Endothelial cell of umbilical vein (primary cell): ENCODE measurements at regions of chr12 and their contacts with region 1.

Region 1: GRCh38 chr12:106302401-106303201 is at the start of gene TCP11L2:
- DNase-seq: peak; percentile 79
- H3K4me3 ChIP-seq: peak within 1 kb of the TSS; percentile 62 to 83 (median 73)
- H3K27ac ChIP-seq: peak within 1 kb of the TSS; percentile 98
- H3K4me1 ChIP-seq: peaks cover 14% of the 10 kb centered on the region
- H3K27me3 ChIP-seq: peaks cover 0 to 1% of the 10 kb centered on the region in 2 experiments
- CTCF ChIP-seq: no peak
- POLR2A ChIP-seq: no peak
- total RNA-seq, gene TCP11L2: 15.3 and 18.7 TPM in 2 replicates

Region 2: GRCh38 chr12:106022568-106023012 is 280.0 kb before region 1 on chr12:
- CTCF ChIA-PET with region 1: no interaction called
- POLR2A ChIA-PET with region 1: no interaction called
- dilution Hi-C with region 1: no loop called
- intact Hi-C with region 1: no loop called
- DNase-seq: peak; percentile 13
- H3K4me3 ChIP-seq: no peak overlapping the region
- H3K27ac ChIP-seq: no peak overlapping the region
- H3K4me1 ChIP-seq: peaks cover 22% of the 10 kb centered on the region
- H3K27me3 ChIP-seq: no peaks in the 10 kb centered on the region
- CTCF ChIP-seq: no peak
- POLR2A ChIP-seq: no peak

Region 3: GRCh38 chr12:106282457-106283097 is 20.0 kb before region 1 on chr12:
- CTCF ChIA-PET with region 1: interaction called, 20 read pairs
- POLR2A ChIA-PET with region 1: interaction called, 3 read pairs
- dilution Hi-C with region 1: no loop called
- intact Hi-C with region 1: no loop called
- DNase-seq: peak; percentile 48
- H3K4me3 ChIP-seq: no peak overlapping the region
- H3K27ac ChIP-seq: no peak overlapping the region
- H3K4me1 ChIP-seq: peaks cover 6% of the 10 kb centered on the region
- H3K27me3 ChIP-seq: peaks cover 4 to 9% of the 10 kb centered on the region in 2 experiments
- CTCF ChIP-seq: peak; percentile 65 to 70
- POLR2A ChIP-seq: no peak

Region 4: DNA sequence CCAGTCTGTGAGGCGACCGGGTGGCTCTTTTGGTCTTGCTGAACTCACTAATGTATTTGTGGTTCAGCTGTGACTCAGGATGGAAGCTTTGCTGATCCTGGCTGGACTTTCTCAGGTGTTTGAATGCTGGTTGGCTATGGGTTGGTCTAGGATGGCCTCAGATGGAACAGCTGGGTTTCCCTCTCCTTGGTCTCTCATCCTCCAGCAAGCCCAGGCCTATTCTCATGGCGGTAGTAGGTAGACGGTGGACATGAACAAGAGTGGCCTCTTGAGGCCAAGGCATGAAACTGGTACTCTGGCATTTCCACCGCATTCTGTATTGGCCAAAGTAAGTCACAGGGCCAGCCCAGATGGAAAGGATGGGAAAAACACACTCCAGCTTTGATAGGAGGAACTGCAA is 43.1 kb after region 1 on chr12:
- CTCF ChIA-PET with region 1: interaction called, 4 read pairs
- POLR2A ChIA-PET with region 1: no interaction called
- dilution Hi-C with region 1: no loop called
- intact Hi-C with region 1: loop called (anchors 5 kb)
- DNase-seq: peak; percentile 67
- H3K4me3 ChIP-seq: no peak overlapping the region
- H3K27ac ChIP-seq: no peak overlapping the region
- H3K4me1 ChIP-seq: no peaks in the 10 kb centered on the region
- H3K27me3 ChIP-seq: peaks cover 3 to 5% of the 10 kb centered on the region in 2 experiments
- CTCF ChIP-seq: peak; percentile 33 to 54
- POLR2A ChIP-seq: no peak

Region 5: DNA sequence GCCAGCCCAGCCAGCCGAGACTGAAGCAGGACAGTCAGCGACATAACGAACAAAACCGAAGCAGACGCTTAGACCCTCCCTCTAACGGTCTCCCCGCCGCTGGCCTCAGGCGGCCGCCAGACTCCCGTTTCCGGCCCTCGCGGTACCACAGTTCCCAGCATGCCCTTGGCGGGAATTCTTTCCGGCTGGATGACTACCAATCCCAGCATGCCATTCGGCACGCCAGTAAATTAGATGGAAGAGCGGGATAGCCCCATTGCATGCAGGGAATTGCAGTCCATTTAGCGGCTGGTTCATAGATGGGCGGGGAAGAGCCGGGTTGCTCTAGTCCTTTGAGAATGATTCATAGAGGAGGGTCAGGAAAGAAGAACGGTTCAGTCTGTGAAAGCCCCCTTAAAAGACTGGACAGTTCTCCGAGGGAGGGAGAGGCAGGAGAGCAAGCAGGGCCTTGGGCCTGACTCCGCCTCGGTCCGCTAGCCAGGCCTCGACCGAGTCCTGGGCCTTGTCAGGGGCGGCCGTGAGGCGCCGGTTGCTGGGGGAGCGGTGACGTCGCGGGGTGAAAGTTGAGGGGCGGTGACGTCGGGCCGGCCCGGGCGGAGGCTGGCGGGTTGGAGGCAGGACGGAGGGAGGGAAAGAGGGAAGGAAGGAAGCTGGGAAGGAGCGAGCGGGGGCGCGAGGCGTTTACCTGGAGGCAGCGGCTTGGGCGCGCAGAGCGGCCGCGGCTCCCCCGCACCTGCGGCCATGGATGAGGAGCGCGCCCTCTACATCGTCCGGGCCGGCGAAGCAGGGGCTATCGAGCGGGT is 471.6 kb after region 1 on chr12 and contains the start of gene RIC8B:
- CTCF ChIA-PET with region 1: no interaction called
- POLR2A ChIA-PET with region 1: no interaction called
- dilution Hi-C with region 1: no loop called
- intact Hi-C with region 1: loop called (anchors 1 kb)
- DNase-seq: peak; percentile 99
- H3K4me3 ChIP-seq: peak within 1 kb of the TSS; percentile 52 to 84 (median 74)
- H3K27ac ChIP-seq: peak within 1 kb of the TSS; percentile 91
- H3K4me1 ChIP-seq: peaks cover 12% of the 10 kb centered on the region
- H3K27me3 ChIP-seq: no peaks in the 10 kb centered on the region
- CTCF ChIP-seq: peak in 1 of 2 donors; percentile 2
- POLR2A ChIP-seq: peak; percentile 91
- total RNA-seq, gene RIC8B: 13.7 and 16.5 TPM in 2 replicates